Activated CD8-positive, alpha-beta memory T cell treated with anti-CD3 and anti-CD28 coated beads, Interleukin-2, amount 10 ng/mL, durations not matched to agents 7 days and 5 days (primary cell): ENCODE measurements at regions of chr5 and their contacts with region 1.

Region 1: GRCh38 chr5:90783460-90784333 is 225.1 kb downstream of the ADGRV1 start:
- DNase-seq: peak; percentile 69
- ATAC-seq: peak; percentile 57
- H3K4me3 Mint-ChIP-seq: no peak overlapping the region
- H3K27ac Mint-ChIP-seq: no peak overlapping the region
- H3K4me1 Mint-ChIP-seq: no peaks in the 10 kb centered on the region
- H3K27me3 Mint-ChIP-seq: peaks cover 13% of the 10 kb centered on the region

Region 2: GRCh38 chr5:90709323-90710155 is 74.2 kb before region 1 on chr5:
- CTCF ChIA-PET with region 1: interaction called, 10 read pairs
- DNase-seq: no peak
- ATAC-seq: peak; percentile 42
- H3K4me3 Mint-ChIP-seq: no peak overlapping the region
- H3K27ac Mint-ChIP-seq: no peak overlapping the region
- H3K4me1 Mint-ChIP-seq: no peaks in the 10 kb centered on the region
- H3K27me3 Mint-ChIP-seq: no peaks in the 10 kb centered on the region